Ascending aorta (tissue), 2 donors: ENCODE measurements at regions of chr4 and their contacts with region 1.

Region 1: GRCh38 chr4:2262143-2262943 is 434 bp upstream of the MXD4 start:
- DNase-seq: peak; percentile 100
- H3K4me3 ChIP-seq: peak overlapping the region; percentile 98
- H3K27ac ChIP-seq: peak overlapping the region; percentile 87 to 96
- H3K4me1 ChIP-seq: peaks cover 38 to 56% of the 10 kb centered on the region in 2 donors
- H3K27me3 ChIP-seq: no peaks in the 10 kb centered on the region
- CTCF ChIP-seq: no peak

Region 2: GRCh38 chr4:337143-337931 is 1925.0 kb before region 1 on chr4 and contains the start of gene ZNF141:
- intact Hi-C with region 1: loop called (anchors 5 kb)
- DNase-seq: peak; percentile 92 to 98
- H3K4me3 ChIP-seq: peak within 1 kb of the TSS; percentile 84 to 100
- H3K27ac ChIP-seq: peak within 1 kb of the TSS; percentile 94 to 95
- H3K4me1 ChIP-seq: peaks cover 0 to 14% of the 10 kb centered on the region in 2 donors
- H3K27me3 ChIP-seq: no peaks in the 10 kb centered on the region
- CTCF ChIP-seq: no peak
- total RNA-seq, gene ZNF141: 2.9 TPM

Region 3: GRCh38 chr4:1683736-1684505 is 578.4 kb before region 1 on chr4 and contains the start of gene FAM53A:
- intact Hi-C with region 1: loop called (anchors 10 kb)
- DNase-seq: peak in 1 of 2 donors; percentile 59
- H3K4me3 ChIP-seq: peak within 1 kb of the TSS; percentile 73 to 76
- H3K27ac ChIP-seq: peak within 1 kb of the TSS; percentile 64 to 85
- H3K4me1 ChIP-seq: peaks cover 0 to 7% of the 10 kb centered on the region in 2 donors
- H3K27me3 ChIP-seq: no peaks in the 10 kb centered on the region
- CTCF ChIP-seq: no peak
- total RNA-seq, gene FAM53A: not detected

Region 4: DNA sequence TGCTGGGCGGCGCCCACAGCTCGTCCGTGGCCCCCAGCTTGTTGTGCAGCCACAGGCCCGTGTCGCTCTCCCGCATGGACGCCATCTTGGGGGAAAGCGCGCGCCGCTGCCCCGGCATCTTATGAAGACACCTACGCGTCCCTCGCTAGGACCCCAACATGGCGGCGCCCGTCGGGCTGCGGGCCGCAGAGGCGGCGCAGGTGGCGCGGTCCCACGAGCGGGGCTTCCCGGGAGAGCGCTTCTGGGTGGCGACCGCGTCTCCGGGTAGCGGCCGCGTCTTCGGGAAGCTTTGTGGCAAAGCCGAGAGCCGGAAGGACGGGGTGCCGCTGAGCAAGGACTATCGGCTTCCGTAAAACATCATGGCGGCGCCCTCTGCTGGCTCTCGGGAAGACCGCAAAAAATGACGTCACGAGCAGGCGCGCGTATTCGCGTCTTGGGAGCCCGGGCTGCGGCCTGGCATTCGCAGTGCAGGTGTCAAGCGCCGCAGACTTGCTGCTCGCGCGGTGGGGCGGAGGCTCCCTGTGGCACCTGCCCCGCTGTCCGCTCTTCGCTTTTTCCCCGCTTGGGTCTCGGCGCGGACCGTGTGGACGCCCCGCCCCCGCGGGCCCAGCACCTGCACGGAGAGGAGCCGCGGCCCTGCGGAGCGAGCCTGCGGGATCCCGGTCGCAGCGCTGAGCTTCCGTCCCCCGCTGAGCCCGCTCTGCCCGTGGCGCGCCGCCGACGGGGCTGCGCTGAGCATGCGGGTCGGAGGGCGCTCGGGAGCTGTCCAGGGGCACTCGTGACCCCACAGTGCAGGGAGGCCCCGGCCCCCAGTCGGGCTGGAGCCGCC is 253.3 kb before region 1 on chr4 and contains the start of gene NELFA:
- intact Hi-C with region 1: loop called (anchors 5 kb)
- DNase-seq: peak; percentile 63 to 96
- H3K4me3 ChIP-seq: peak within 1 kb of the TSS; percentile 84 to 98
- H3K27ac ChIP-seq: peak within 1 kb of the TSS; percentile 96 to 98
- H3K4me1 ChIP-seq: peaks cover 0 to 2% of the 10 kb centered on the region in 2 donors
- H3K27me3 ChIP-seq: no peaks in the 10 kb centered on the region
- CTCF ChIP-seq: peak in 2 of 3 experiments; percentile 44 to 54
- total RNA-seq, gene NELFA: 11.9 TPM

Region 5: GRCh38 chr4:2418650-2419571 is 156.6 kb after region 1 on chr4 and contains the start of gene CFAP99:
- intact Hi-C with region 1: loop called (anchors 1 kb)
- DNase-seq: peak; percentile 87 to 99
- H3K4me3 ChIP-seq: peak within 1 kb of the TSS; percentile 76 to 86
- H3K27ac ChIP-seq: peak within 1 kb of the TSS; percentile 19 to 29
- H3K4me1 ChIP-seq: peaks cover 6 to 9% of the 10 kb centered on the region in 2 donors
- H3K27me3 ChIP-seq: no peaks in the 10 kb centered on the region
- CTCF ChIP-seq: no peak
- total RNA-seq, gene CFAP99: not detected

Region 6: DNA sequence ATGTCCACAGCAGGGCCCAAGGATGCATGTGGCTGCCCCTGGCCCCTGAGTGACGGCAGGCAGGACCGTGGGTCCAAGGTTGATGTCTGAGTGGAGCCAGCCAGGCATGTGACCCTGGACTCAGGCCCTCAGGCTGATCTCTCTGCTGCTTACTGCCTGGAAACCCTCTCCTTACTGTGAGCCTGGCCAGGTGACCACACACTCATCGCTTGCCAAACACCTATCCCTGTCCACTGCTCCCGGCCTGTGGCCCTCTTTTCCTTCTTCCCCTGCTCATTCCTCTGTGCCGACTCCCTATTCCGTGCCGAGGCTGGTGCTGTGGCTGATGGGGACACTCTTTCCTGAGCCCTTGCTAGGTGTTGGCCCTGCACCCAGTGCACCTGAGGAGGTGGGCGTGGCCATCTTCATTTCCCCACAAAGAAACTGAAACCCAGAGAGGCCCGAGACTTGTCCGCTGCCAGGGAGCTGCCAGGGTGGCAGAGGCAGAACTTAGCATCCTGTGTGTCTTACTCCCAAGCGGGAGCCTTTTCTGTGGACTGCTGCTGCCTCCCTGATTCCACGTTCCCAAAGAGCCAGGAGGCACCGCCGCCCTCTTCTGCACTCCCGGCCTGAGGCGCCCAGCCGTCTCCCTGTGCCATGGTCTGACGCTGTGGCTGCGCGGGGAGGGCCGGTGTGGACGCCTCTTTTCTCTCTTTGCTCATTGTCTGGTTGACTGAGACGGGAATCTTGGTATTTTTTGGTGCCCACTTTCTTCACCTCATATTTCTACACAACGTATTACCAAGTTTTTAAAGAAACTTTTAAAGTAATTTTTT is 195.3 kb after region 1 on chr4:
- intact Hi-C with region 1: no loop called
- DNase-seq: no peak
- H3K4me3 ChIP-seq: no peak overlapping the region
- H3K27ac ChIP-seq: no peak overlapping the region
- H3K4me1 ChIP-seq: peaks cover 3 to 4% of the 10 kb centered on the region in 2 donors
- H3K27me3 ChIP-seq: no peaks in the 10 kb centered on the region
- CTCF ChIP-seq: no peak

Region 7: GRCh38 chr4:2536193-2537010 is 274.1 kb after region 1 on chr4 and contains the start of gene FAM193A:
- intact Hi-C with region 1: loop called (anchors 1 kb)
- DNase-seq: peak; percentile 98 to 100
- H3K4me3 ChIP-seq: peak within 1 kb of the TSS; percentile 97 to 100
- H3K27ac ChIP-seq: peak within 1 kb of the TSS; percentile 89 to 97
- H3K4me1 ChIP-seq: peaks cover 15 to 16% of the 10 kb centered on the region in 2 donors
- H3K27me3 ChIP-seq: no peaks in the 10 kb centered on the region
- CTCF ChIP-seq: no peak
- total RNA-seq, gene FAM193A: 30.9 TPM

Region 8: DNA sequence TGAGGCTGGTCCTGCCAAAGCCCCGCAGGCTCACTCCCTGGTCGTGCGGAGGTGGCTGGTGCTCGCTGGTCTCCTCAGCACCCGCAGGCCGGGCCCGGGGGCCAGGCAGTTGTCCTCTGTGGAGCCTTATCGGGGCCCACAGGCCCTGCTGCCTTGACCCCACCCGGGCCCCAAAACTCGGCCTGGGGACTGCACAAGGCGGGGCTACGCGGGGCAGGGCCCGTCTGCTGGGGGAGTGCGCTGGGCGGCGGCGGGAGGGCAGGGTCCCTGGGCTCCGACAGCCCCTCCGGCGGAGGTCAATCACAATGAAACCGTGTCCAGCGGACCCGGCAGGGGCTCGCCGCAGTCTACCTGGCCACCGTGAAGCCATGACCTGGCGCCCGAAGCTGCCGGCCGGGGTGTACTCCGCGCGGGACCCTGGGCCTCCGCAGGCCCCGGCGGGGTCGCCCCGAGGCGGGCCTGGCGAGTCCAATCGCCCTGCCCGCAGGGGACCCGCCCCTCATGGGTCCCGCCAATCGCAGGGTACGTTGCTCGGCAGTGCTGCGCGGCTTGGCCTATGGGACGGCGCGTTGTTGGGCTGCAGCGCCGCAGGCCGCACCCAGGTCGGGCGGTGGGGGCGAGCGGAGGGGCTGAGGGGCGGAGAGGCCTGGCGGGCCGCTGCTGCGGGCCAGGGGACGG is 581.1 kb after region 1 on chr4 and contains the start of gene ADD1:
- intact Hi-C with region 1: loop called (anchors 10 kb)
- DNase-seq: peak; percentile 67 to 96
- H3K4me3 ChIP-seq: peak within 1 kb of the TSS; percentile 87 to 90
- H3K27ac ChIP-seq: peak within 1 kb of the TSS; percentile 93 to 96
- H3K4me1 ChIP-seq: peaks cover 3 to 31% of the 10 kb centered on the region in 2 donors
- H3K27me3 ChIP-seq: no peaks in the 10 kb centered on the region
- CTCF ChIP-seq: no peak
- total RNA-seq, gene ADD1: 261 TPM

Region 9: DNA sequence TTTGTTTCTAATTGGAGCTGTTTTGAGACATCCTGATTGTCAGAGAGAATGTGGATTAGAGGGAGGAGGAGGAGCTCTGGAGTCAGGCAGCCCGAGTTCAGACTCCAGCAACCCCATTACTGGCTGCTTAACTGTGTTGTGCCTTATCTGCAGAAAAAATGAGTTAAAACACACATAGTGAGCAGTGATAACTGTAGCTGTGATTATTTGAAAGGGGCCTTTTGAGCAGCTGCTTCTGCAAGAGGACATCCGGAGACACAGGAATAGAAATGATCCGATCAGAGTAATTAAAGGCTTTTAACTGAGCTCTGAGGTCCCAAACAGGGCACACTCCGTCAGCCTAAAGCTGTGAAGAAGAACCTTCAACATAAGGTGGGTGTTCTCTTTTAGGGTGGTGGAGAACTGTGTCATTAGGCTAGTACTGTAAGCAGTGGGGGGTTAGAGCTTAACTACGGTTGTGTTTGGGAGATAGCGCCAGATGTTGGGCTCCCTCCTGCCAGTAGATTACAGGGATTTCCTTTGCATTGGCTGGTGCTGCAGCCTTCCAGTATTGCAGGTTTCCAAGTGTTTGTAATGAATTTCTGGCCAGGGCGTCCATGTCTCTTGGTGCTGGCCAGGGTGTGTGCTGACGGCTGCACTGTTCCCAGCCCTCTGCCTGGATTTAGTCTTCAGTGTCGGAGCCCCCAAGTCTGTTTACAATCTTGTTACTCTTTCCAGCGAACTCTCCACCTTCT is 605.6 kb after region 1 on chr4:
- intact Hi-C with region 1: no loop called
- DNase-seq: no peak
- H3K4me3 ChIP-seq: peak overlapping the region; percentile 24 to 53
- H3K27ac ChIP-seq: peak overlapping the region in 1 of 2 donors; percentile 37
- H3K4me1 ChIP-seq: peaks cover 19 to 61% of the 10 kb centered on the region in 2 donors
- H3K27me3 ChIP-seq: no peaks in the 10 kb centered on the region
- CTCF ChIP-seq: no peak